A673 (cell line): ENCODE measurements at regions of chr15 and their contacts with region 1.

Region 1: GRCh38 chr15:40593588-40594428 is at the start of gene KNL1:
- DNase-seq: peak; percentile 95
- H3K4me3 ChIP-seq: peak within 1 kb of the TSS; percentile 68
- H3K27ac ChIP-seq: peak within 1 kb of the TSS; percentile 97
- H3K4me1 ChIP-seq: no peaks in the 10 kb centered on the region
- H3K27me3 ChIP-seq: no peaks in the 10 kb centered on the region
- CTCF ChIP-seq: no peak
- total RNA-seq, gene KNL1: 36.7 and 40.3 TPM in 2 replicates

Region 2: GRCh38 chr15:40028193-40028592 is 565.6 kb before region 1 on chr15:
- CTCF ChIA-PET with region 1: no interaction called
- POLR2A ChIA-PET with region 1: interaction called, 10 read pairs
- intact Hi-C with region 1: no loop called
- DNase-seq: no peak
- H3K4me3 ChIP-seq: no peak overlapping the region
- H3K27ac ChIP-seq: no peak overlapping the region
- H3K4me1 ChIP-seq: no peaks in the 10 kb centered on the region
- H3K27me3 ChIP-seq: no peaks in the 10 kb centered on the region
- CTCF ChIP-seq: no peak

Region 3: GRCh38 chr15:40421246-40422157 is 172.3 kb before region 1 on chr15:
- CTCF ChIA-PET with region 1: no interaction called
- POLR2A ChIA-PET with region 1: no interaction called
- intact Hi-C with region 1: no loop called
- DNase-seq: peak; percentile 78
- H3K4me3 ChIP-seq: no peak overlapping the region
- H3K27ac ChIP-seq: no peak overlapping the region
- H3K4me1 ChIP-seq: no peaks in the 10 kb centered on the region
- H3K27me3 ChIP-seq: no peaks in the 10 kb centered on the region
- CTCF ChIP-seq: peak; percentile 92

Region 4: DNA sequence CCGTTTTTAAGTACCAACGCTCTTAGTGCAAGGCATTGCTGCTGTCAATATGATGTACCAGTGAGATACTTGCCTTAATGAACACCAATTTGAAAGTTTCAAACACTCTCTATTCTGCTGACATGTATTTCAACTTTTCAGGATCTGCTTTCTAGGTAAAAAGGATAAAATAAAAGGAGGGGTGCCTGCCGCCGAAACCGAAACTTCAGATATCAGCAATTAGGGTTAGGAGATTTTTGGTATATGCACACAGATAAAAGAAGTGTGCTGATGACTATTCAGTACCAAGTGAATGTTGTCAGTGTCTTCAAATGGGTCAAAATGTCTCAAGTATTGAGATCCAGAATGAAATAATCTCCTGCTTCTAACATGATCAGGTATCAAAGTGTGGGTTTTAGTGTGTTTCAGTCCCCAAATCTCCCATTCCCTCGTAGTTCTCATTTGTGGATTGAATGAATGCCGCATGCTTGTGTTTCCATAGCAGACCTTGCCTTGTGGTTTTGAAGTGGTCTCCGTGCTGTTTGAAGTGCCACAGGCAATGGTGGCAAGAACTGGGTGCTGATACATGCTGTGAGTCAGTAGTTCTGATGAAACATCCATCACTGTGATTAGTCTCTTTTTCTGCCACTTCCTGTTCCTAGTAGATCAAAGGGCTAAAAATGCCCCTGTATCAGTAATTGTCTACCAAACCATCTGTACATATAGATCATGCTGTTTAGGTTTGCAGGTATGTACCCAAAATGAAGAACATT is 100.5 kb before region 1 on chr15:
- CTCF ChIA-PET with region 1: no interaction called
- POLR2A ChIA-PET with region 1: interaction called, 13 read pairs
- intact Hi-C with region 1: no loop called
- DNase-seq: no peak
- H3K4me3 ChIP-seq: no peak overlapping the region
- H3K27ac ChIP-seq: no peak overlapping the region
- H3K4me1 ChIP-seq: no peaks in the 10 kb centered on the region
- H3K27me3 ChIP-seq: no peaks in the 10 kb centered on the region
- CTCF ChIP-seq: no peak

Region 5: GRCh38 chr15:40569139-40569953 is 24.5 kb before region 1 on chr15 and contains the start of gene RPUSD2:
- CTCF ChIA-PET with region 1: interaction called, 15 read pairs
- POLR2A ChIA-PET with region 1: interaction called, 10 read pairs
- intact Hi-C with region 1: no loop called
- DNase-seq: peak; percentile 96
- H3K4me3 ChIP-seq: peak within 1 kb of the TSS; percentile 95
- H3K27ac ChIP-seq: peak within 1 kb of the TSS; percentile 64
- H3K4me1 ChIP-seq: peaks cover 11% of the 10 kb centered on the region
- H3K27me3 ChIP-seq: no peaks in the 10 kb centered on the region
- CTCF ChIP-seq: no peak
- total RNA-seq, gene RPUSD2: 17.0 and 18.1 TPM in 2 replicates

Region 6: GRCh38 chr15:40694688-40695468 is 101.1 kb after region 1 on chr15 and contains the start of gene RAD51:
- CTCF ChIA-PET with region 1: no interaction called
- POLR2A ChIA-PET with region 1: no interaction called
- intact Hi-C with region 1: loop called (anchors 1 kb)
- DNase-seq: peak; percentile 97
- H3K4me3 ChIP-seq: peak within 1 kb of the TSS; percentile 76
- H3K27ac ChIP-seq: peak within 1 kb of the TSS; percentile 94
- H3K4me1 ChIP-seq: peaks cover 4% of the 10 kb centered on the region
- H3K27me3 ChIP-seq: no peaks in the 10 kb centered on the region
- CTCF ChIP-seq: no peak
- total RNA-seq, gene RAD51: 44.8 and 51.1 TPM in 2 replicates

Region 7: GRCh38 chr15:40893733-40894688 is 300.2 kb after region 1 on chr15 and contains the start of gene VPS18:
- CTCF ChIA-PET with region 1: interaction called, 8 read pairs
- POLR2A ChIA-PET with region 1: no interaction called
- intact Hi-C with region 1: loop called (anchors 2 kb)
- DNase-seq: peak; percentile 98
- H3K4me3 ChIP-seq: peak within 1 kb of the TSS; percentile 95
- H3K27ac ChIP-seq: peak within 1 kb of the TSS; percentile 79
- H3K4me1 ChIP-seq: peaks cover 6% of the 10 kb centered on the region
- H3K27me3 ChIP-seq: no peaks in the 10 kb centered on the region
- CTCF ChIP-seq: peak; percentile 87
- total RNA-seq, gene VPS18: 21.9 and 23.8 TPM in 2 replicates